Aorta (tissue), 5 donors: ENCODE measurements at regions of chr10 and their contacts with region 1.

Region 1: GRCh38 chr10:21509341-21510240 is 15.9 kb downstream of the SKIDA1 start:
- DNase-seq: no peak
- ATAC-seq: no peak
- H3K4me3 ChIP-seq: peak overlapping the region; percentile 12 to 40
- H3K27ac ChIP-seq: no peak overlapping the region
- H3K4me1 ChIP-seq: no peaks in the 10 kb centered on the region
- H3K27me3 ChIP-seq: no peaks in the 10 kb centered on the region

Region 2: DNA sequence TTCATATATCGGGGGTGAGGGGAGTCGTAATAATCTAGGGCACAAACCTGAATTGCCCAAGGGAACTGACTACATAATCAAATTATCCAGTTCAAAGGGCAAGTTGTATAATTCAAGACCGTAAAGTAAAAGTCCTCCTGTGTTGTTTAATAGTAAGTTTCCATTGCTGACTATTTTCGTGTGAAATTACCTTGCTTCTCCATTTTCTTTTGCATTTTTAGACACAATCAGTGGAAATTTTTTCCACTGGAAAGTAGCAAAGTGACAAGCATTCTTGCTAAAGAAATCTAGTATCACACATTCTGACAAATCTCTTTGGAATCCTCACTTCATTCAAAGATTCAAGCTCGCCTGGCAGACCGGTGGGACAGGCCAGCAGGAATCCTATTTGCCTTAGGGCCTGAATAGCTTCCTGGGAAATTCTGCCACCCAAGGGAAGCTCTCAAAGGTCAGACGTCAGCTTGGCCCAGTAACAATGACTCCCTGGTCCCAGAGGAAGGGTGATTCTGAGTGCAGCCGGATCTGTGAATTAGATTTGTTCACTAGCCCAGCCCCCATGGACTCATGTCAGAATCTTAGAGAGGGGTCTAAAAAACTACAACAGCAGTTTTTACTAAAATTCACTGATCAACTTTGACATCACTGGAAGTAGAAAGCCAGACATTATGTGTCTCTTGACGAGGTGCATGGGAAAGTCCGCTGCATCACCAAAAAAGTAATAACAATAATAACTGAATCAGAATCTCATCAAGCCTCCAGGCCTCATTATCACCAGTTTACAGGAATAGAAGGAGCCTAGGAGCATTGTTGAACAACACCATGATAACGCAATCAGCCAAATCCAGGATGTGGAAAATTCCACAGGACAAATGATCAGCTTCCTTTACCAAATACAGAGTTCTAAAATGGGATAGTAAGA is 145.1 kb before region 1 on chr10:
- intact Hi-C with region 1: no loop called
- DNase-seq: no peak
- ATAC-seq: no peak
- H3K4me3 ChIP-seq: no peak overlapping the region
- H3K27ac ChIP-seq: no peak overlapping the region
- H3K4me1 ChIP-seq: no peaks in the 10 kb centered on the region
- H3K27me3 ChIP-seq: no peaks in the 10 kb centered on the region

Region 3: DNA sequence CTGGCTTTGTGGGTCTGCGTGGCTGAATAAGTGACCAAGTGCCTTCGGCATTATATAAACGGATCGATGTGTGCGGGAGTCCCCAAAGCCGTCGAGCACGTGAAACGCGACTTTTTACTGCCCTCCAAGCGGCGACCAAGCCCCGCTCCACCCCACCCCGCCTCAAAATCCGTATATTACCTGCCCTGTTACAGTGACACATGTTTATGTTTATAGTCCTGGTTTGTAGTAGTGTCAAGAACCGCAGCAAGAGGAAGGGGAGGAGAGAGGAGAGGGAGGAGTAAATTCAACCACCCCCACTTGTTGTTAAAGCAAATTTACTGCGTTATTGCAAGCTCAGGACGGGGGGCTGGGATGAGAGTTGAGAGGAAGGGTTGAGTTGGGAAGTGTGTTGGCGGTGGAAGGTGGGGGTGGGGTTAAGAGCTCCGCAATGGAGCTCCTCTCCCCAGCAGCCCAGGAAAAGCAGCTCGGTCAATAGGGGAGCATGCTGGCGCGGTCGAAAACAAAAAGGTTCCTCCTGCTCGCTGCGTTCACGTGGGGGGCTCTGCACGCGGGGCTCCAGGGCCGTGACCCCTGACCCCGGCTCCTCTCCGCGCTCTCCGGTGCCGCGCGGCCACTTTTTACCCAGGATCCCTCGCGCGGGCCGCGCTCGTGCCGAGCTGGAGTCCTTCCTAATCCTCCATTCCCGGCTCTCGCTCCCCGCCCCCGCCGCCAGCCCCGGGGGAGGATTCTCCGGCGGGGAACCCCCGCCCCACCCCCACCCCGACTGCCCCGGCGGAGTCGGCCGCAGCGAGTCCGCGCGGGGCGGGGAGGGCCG is 16.0 kb after region 1 on chr10 and contains the start of gene SKIDA1:
- intact Hi-C with region 1: no loop called
- DNase-seq: peak; percentile 89 to 95
- ATAC-seq: peak; percentile 91
- H3K4me3 ChIP-seq: peak within 1 kb of the TSS; percentile 61 to 62
- H3K27ac ChIP-seq: peak within 1 kb of the TSS; percentile 93 to 94
- H3K4me1 ChIP-seq: no peaks in the 10 kb centered on the region
- H3K27me3 ChIP-seq: no peaks in the 10 kb centered on the region
- total RNA-seq, gene SKIDA1: 1.2 to 1.4 TPM

Region 4: GRCh38 chr10:21570761-21571521 is 61.4 kb after region 1 on chr10:
- intact Hi-C with region 1: no loop called
- DNase-seq: no peak
- ATAC-seq: no peak
- H3K4me3 ChIP-seq: no peak overlapping the region
- H3K27ac ChIP-seq: no peak overlapping the region
- H3K4me1 ChIP-seq: peaks cover 3 to 7% of the 10 kb centered on the region in 2 donors
- H3K27me3 ChIP-seq: no peaks in the 10 kb centered on the region

Region 5: DNA sequence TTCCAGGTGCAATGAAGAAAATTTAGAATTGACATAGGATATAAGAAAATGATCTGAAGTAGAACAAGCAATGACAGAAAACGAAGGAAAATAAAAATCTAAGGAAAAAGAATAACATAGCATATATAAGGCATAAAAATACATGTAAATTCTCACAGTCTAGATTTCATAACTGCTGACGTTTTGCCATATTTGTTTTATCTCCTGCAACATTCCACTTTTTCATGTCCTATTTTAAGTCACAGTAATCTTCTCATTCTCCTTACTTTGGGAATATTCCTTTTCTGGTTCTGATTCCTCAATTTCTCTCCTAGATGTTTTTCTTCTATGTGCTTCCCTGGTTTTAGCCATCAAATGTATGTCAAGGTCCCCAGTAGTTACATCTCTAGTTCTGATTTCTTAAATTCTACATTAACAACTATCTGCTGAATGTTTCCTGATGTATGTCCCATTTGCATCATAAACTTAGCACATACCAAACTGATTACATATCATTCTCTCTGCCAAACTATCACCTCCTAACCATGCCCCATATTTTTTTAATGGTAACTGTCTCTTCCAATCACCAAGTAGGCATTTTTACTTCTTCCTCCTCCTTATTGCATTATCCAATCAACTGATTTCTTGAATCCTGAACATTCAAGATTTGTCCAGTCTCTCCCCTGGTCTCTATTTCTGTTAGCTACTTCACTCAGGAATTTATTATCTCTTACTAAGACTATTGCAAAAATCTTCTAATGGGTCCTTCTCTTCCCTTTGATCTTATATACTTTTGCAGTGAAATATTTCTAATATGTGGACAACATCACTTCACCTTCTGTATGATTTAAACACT is 322.6 kb after region 1 on chr10:
- intact Hi-C with region 1: no loop called
- DNase-seq: no peak
- ATAC-seq: no peak
- H3K4me3 ChIP-seq: no peak overlapping the region
- H3K27ac ChIP-seq: no peak overlapping the region
- H3K4me1 ChIP-seq: no peaks in the 10 kb centered on the region
- H3K27me3 ChIP-seq: no peaks in the 10 kb centered on the region

Region 6: DNA sequence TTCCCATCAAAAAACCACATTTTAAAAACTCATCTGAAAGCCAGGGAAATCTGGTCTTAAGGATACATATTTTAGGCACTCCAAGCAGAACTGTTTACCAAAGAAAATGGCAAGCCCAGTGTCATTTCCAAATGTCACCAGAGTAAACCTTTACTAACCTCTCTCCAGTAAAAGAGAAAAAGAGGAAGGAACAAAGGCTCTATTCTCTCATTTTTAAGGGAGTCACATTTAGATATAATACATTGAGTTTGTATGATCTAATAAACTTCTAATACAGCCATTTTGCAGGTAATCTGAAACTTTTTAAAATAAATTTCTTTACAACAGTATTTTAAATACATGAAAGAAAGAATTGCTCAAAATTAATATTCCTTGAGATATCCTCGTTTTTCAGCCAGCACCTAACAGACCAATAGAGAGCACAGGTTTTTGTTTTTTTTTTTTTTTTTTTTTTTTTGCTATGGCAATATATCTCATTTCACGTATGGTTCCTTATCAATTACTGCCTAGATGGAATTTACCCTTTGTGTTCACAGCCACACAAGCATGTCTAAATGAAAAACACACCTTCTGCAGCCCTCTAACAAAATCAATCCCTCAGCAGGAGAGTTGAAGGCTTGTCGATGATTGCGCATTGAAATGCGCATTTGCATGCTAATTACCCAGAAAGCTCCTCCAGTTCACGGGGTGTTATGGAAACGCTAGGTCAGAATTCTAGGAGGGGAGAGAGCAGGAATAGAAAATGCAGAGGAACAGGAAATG is 1546.0 kb after region 1 on chr10:
- intact Hi-C with region 1: loop called in 1 of 2 experiments (anchors 5 kb)
- DNase-seq: no peak
- ATAC-seq: no peak
- H3K4me3 ChIP-seq: no peak overlapping the region
- H3K27ac ChIP-seq: no peak overlapping the region
- H3K4me1 ChIP-seq: peaks cover 2% of the 10 kb centered on the region in 2 donors
- H3K27me3 ChIP-seq: no peaks in the 10 kb centered on the region